ENCODE measurements at regions of chr3 and their contacts with region 1.

Region 1: DNA sequence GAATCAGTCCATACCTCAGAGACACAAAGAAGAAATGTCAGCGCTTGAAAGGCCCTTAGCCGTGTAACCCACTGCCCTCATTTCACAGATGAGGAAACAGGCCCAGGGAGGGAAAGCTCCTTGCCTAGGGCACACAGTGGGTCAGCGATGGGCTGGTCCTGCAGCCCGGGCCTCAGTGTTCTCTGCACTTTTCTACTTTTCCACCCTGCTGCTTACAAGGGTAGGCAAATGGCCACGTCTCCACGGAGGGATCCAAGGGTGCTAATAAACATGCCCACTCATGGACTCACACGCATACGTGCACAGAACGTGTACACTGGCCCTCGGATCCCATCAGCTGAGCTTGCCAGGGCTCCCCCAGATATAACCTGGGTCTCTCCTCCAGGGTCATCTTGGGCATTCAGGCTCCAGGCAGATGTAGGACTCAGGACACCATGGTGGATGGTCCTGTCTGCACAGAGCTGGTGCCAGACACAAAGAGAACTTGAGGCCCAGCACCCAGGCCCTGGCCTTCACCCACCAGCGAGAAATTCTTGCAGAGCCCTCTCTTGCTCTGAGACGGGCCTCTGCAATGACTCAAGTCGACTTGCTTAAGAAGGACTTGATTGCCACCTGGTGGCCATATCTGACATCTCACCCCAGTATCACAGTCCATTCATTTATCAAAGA is 34.5 kb upstream of the VPS8 start:
- DNase-seq: no peak
- ATAC-seq: peak; percentile 90

Region 2: GRCh38 chr3:184561061-184561912 is 216.2 kb before region 1 on chr3 and contains the start of gene EPHB3:
- intact Hi-C with region 1: loop called (anchors 1 kb)
- DNase-seq: peak; percentile 99
- ATAC-seq: peak; percentile 98
- total RNA-seq, gene EPHB3: 1.6 TPM

Region 3: DNA sequence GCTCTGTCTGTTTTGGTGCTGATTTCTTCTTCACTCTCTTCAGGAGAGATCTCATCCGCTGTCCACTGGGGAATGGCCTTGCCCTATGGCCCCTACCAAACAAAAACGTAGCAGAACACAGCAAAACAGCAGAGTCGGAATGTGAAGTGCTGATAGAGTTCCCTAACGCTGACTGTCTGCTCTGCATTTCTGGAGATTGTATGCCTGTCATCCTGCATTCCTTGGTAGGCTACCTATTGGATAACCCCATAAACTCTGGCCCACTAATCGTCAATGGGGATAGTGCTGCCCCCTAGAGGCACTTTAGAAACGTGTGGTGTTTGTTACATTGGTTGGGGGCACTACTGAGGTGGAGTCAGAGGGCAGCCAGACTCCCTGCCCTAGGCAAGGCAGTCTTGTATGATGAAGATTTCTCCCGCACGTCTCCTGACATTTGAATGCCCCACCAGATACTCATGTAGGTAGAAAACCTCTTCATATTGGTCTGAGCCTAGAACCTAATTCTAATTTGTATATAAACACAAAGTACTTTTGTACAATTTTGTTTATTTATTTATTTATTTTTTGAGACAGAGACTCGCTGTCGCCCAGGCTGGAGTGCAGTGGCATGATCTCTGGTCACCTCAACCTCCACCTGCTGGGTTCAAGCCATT is 50.0 kb before region 1 on chr3:
- intact Hi-C with region 1: loop called (anchors 2 kb)
- DNase-seq: no peak
- ATAC-seq: peak; percentile 84

Region 4: GRCh38 chr3:184927796-184928315 is 150.4 kb after region 1 on chr3:
- intact Hi-C with region 1: no loop called
- DNase-seq: no peak
- ATAC-seq: no peak